ENCODE measurements at regions of chr5 and their contacts with region 1.

Region 1: DNA sequence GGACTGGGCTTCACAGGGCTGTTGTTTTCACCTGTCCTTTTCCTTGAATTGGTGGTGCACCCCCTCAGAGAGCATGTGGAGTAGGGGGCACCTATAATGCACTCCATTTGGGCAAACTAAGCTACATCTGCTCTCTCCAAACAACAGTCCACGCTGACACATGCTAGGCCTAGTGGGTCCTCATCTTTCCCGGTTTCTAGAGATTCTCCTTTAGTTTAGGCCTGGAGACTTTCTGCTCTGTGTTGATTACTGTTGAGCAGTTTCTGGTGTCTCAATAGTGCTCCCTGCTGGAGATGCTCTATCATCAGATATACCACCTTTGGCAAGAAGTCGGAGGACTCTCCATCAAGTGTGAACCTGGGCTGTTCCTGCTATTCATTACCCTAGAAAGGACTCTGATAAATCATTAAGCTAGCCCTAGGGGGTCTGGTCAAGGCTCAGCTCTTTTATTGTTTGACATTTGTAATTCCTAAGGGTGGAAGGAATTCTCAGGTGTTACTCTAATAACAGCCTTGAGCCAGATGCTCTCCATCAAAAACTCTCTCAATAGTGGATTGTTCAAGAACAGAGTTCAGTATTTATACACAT is 64.0 kb upstream of the FYB1 start:
- DNase-seq: peak; percentile 76
- ATAC-seq: peak; percentile 95
- H3K4me3 ChIP-seq: no peak overlapping the region
- H3K27ac ChIP-seq: no peak overlapping the region
- H3K4me1 ChIP-seq: no peaks in the 10 kb centered on the region
- H3K27me3 ChIP-seq: peaks cover 1% of the 10 kb centered on the region; the same call in 1 of the 2 replicates
- CTCF ChIP-seq: peak; percentile 69
- POLR2A ChIP-seq: no peak
- RAD21 ChIP-seq: peak; percentile 80

Region 2: DNA sequence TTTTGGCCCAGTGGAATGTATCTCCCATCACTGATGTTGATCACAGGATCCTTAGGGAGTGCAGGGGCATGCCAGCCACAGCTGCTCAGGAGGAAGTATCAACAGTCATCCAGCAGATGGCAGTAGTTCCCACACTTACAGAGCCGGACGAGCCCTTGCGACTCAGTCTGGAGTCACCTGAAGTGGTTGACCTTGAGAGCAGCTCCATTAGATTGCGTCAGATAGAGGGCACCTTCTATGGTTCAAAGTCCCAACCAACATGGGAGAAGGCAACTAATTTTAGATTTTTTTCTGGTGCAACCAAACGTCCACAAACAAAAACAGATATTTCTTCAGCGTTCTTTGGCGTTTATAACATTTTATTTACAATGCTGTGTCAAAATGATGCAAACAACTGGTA is 900.4 kb before region 1 on chr5:
- CTCF ChIA-PET with region 1: no interaction called
- POLR2A ChIA-PET with region 1: no interaction called
- dilution Hi-C with region 1: no loop called
- in situ Hi-C with region 1: no loop called
- intact Hi-C with region 1: loop called (anchors 5 kb)
- DNase-seq: peak; percentile 68
- ATAC-seq: peak; percentile 99
- H3K4me3 ChIP-seq: no peak overlapping the region
- H3K27ac ChIP-seq: no peak overlapping the region
- H3K4me1 ChIP-seq: no peaks in the 10 kb centered on the region; the same call in 1 of the 2 replicates
- H3K27me3 ChIP-seq: peaks cover 24% of the 10 kb centered on the region
- CTCF ChIP-seq: peak; percentile 70
- POLR2A ChIP-seq: no peak
- RAD21 ChIP-seq: peak; percentile 71

Region 3: GRCh38 chr5:38994324-38994927 is 288.9 kb before region 1 on chr5:
- CTCF ChIA-PET with region 1: interaction called, 3 read pairs
- POLR2A ChIA-PET with region 1: no interaction called
- dilution Hi-C with region 1: no loop called
- in situ Hi-C with region 1: loop called (anchors 10 kb)
- intact Hi-C with region 1: loop called (anchors 1 kb)
- DNase-seq: peak; percentile 76
- ATAC-seq: peak; percentile 63
- H3K4me3 ChIP-seq: no peak overlapping the region
- H3K27ac ChIP-seq: no peak overlapping the region
- H3K4me1 ChIP-seq: no peaks in the 10 kb centered on the region
- H3K27me3 ChIP-seq: no peaks in the 10 kb centered on the region
- CTCF ChIP-seq: peak; percentile 67
- POLR2A ChIP-seq: no peak
- RAD21 ChIP-seq: peak; percentile 81

Region 4: DNA sequence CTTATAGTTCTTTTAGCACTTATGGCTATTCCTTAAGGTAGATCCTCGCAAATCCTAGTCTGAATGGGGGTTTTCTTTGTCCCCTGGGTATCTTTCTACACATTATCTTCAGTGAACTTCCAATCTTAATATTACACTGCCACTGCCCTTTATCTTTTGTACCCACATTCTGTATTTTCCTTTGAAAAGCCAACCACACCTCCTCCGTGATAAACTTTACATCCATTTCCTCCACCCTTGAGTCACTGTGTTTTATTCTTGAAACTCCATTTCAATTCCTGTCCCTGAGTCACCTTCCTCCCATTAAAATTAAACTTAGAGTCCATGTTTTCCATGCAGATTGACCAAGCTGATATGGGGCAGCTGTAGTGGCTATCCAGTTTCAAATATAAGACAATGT is 165.9 kb before region 1 on chr5:
- CTCF ChIA-PET with region 1: no interaction called
- POLR2A ChIA-PET with region 1: no interaction called
- dilution Hi-C with region 1: no loop called
- in situ Hi-C with region 1: no loop called
- intact Hi-C with region 1: no loop called
- DNase-seq: peak; percentile 58
- ATAC-seq: no peak
- H3K4me3 ChIP-seq: no peak overlapping the region
- H3K27ac ChIP-seq: no peak overlapping the region
- H3K4me1 ChIP-seq: peaks cover 3% of the 10 kb centered on the region; the same call in 1 of the 2 replicates
- H3K27me3 ChIP-seq: no peaks in the 10 kb centered on the region
- CTCF ChIP-seq: no peak
- POLR2A ChIP-seq: no peak
- RAD21 ChIP-seq: no peak

Region 5: GRCh38 chr5:39148983-39149534 is 134.3 kb before region 1 on chr5:
- CTCF ChIA-PET with region 1: no interaction called
- POLR2A ChIA-PET with region 1: no interaction called
- dilution Hi-C with region 1: no loop called
- in situ Hi-C with region 1: loop called (anchors 10 kb)
- intact Hi-C with region 1: loop called (anchors 2 kb)
- DNase-seq: peak; percentile 24
- ATAC-seq: 0 out of 2 replicates have a peak, but pooled peaks have one; percentile 37
- H3K4me3 ChIP-seq: no peak overlapping the region
- H3K27ac ChIP-seq: no peak overlapping the region
- H3K4me1 ChIP-seq: no peaks in the 10 kb centered on the region
- H3K27me3 ChIP-seq: no peaks in the 10 kb centered on the region
- CTCF ChIP-seq: peak; percentile 37
- POLR2A ChIP-seq: no peak
- RAD21 ChIP-seq: peak; percentile 38

Region 6: GRCh38 chr5:39302472-39302871 is 19.1 kb after region 1 on chr5:
- CTCF ChIA-PET with region 1: no interaction called
- POLR2A ChIA-PET with region 1: no interaction called
- dilution Hi-C with region 1: no loop called
- in situ Hi-C with region 1: no loop called
- intact Hi-C with region 1: loop called (anchors 2 kb)
- DNase-seq: no peak
- ATAC-seq: no peak
- H3K4me3 ChIP-seq: no peak overlapping the region
- H3K27ac ChIP-seq: no peak overlapping the region
- H3K4me1 ChIP-seq: no peaks in the 10 kb centered on the region
- H3K27me3 ChIP-seq: peaks cover 5% of the 10 kb centered on the region
- CTCF ChIP-seq: no peak
- POLR2A ChIP-seq: no peak
- RAD21 ChIP-seq: no peak

Measured in IMR-90 (cell line).